Heart right ventricle (tissue), 16 donors: ENCODE measurements at regions of chr7 and their contacts with region 1.

Region 1: GRCh38 chr7:157851501-157852067 is 514.8 kb downstream of the DNAJB6 start:
- DNase-seq: peak; percentile 35 to 56
- ATAC-seq: peak in 7 of 8 donors; percentile 35 to 63 (median 43)
- H3K4me3 ChIP-seq: peak overlapping the region in 8 of 10 donors; percentile 1 to 35 (median 18)
- H3K27ac ChIP-seq: peak overlapping the region in 1 of 10 donors; percentile 74
- H3K4me1 ChIP-seq: peaks cover 0 to 18% (median 0%) of the 10 kb centered on the region in 9 donors
- H3K27me3 ChIP-seq: peaks cover 0 to 35% (median 0%) of the 10 kb centered on the region in 7 donors
- CTCF ChIP-seq: no peak

Region 2: GRCh38 chr7:157645539-157645938 is 206.0 kb before region 1 on chr7:
- intact Hi-C with region 1: no loop called
- DNase-seq: no peak
- ATAC-seq: no peak
- H3K4me3 ChIP-seq: no peak overlapping the region
- H3K27ac ChIP-seq: no peak overlapping the region
- H3K4me1 ChIP-seq: no peaks in the 10 kb centered on the region
- H3K27me3 ChIP-seq: peaks cover 0 to 7% (median 0%) of the 10 kb centered on the region in 7 donors
- CTCF ChIP-seq: no peak

Region 3: DNA sequence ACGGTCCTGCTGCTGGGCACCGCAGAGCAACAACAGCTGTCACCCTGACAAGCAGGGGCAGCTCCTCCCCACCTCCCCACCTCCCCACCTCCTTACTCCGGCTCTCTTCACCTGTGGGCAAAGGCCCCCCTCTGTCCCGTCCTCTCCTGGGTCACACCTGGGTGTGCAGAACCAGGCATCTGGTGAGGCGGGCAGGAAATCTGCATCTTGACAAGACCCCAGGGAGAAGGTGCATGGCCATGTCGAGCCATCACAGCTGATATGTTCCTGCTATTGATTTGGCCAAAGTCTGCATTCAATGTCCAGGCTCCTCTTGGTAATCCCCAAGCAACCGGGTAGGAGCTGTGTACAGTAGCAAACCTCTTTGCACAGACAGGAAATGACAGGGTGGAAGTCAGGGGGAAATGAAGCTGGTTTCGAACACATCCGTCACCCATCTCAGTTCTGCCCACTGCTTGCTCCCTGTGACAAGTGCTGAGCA is 39.4 kb after region 1 on chr7:
- intact Hi-C with region 1: loop called in 1 of 10 experiments (anchors 2 kb)
- DNase-seq: no peak
- ATAC-seq: no peak
- H3K4me3 ChIP-seq: no peak overlapping the region
- H3K27ac ChIP-seq: no peak overlapping the region
- H3K4me1 ChIP-seq: no peaks in the 10 kb centered on the region
- H3K27me3 ChIP-seq: peaks cover 0 to 23% (median 4%) of the 10 kb centered on the region in 7 donors
- CTCF ChIP-seq: no peak